B cell (primary cell): ENCODE measurements at regions of chr12 and their contacts with region 1.

Region 1: GRCh38 chr12:84874125-84874824 is 38.3 kb downstream of the SLC6A15 start:
- DNase-seq: peak; percentile 36
- ATAC-seq: peak; percentile 41
- H3K4me3 ChIP-seq: no peak overlapping the region
- H3K4me3 Mint-ChIP-seq: no peak overlapping the region
- H3K27ac ChIP-seq: no peak overlapping the region
- H3K27ac Mint-ChIP-seq: no peak overlapping the region
- H3K4me1 ChIP-seq: no peaks in the 10 kb centered on the region
- H3K4me1 Mint-ChIP-seq: no peaks in the 10 kb centered on the region
- H3K27me3 ChIP-seq: no peaks in the 10 kb centered on the region
- H3K27me3 Mint-ChIP-seq: no peaks in the 10 kb centered on the region
- CTCF ChIP-seq: peak; percentile 95

Region 2: GRCh38 chr12:84891106-84891838 is 17.0 kb after region 1 on chr12:
- CTCF ChIA-PET with region 1: interaction called, 33 read pairs
- POLR2A ChIA-PET with region 1: no interaction called
- intact Hi-C with region 1: no loop called
- DNase-seq: no peak
- ATAC-seq: no peak
- H3K4me3 ChIP-seq: no peak overlapping the region
- H3K4me3 Mint-ChIP-seq: no peak overlapping the region
- H3K27ac ChIP-seq: no peak overlapping the region
- H3K27ac Mint-ChIP-seq: no peak overlapping the region
- H3K4me1 ChIP-seq: no peaks in the 10 kb centered on the region
- H3K4me1 Mint-ChIP-seq: no peaks in the 10 kb centered on the region
- H3K27me3 ChIP-seq: no peaks in the 10 kb centered on the region
- H3K27me3 Mint-ChIP-seq: no peaks in the 10 kb centered on the region
- CTCF ChIP-seq: no peak

Region 3: DNA sequence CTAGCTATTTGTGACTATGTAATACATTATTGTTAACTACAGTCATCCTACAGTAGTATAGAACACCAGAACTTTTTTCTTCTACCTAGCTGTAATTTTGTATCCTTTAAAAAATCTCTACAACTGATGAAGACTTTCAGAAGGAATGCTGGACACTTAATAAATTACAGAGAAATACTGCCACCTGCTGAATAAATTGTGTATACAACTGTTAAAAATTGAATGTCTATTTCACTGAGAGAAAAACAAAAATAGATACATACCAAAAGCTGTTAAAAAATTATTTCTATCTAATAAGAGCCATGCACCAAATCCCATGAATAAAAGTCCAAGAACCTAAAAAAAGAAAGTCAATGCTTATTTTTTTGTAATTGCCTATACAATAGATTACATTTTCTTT is 155.2 kb after region 1 on chr12:
- CTCF ChIA-PET with region 1: interaction called, 20 read pairs
- POLR2A ChIA-PET with region 1: no interaction called
- intact Hi-C with region 1: no loop called
- DNase-seq: no peak
- ATAC-seq: no peak
- H3K4me3 ChIP-seq: no peak overlapping the region
- H3K4me3 Mint-ChIP-seq: no peak overlapping the region
- H3K27ac ChIP-seq: no peak overlapping the region
- H3K27ac Mint-ChIP-seq: no peak overlapping the region
- H3K4me1 ChIP-seq: no peaks in the 10 kb centered on the region
- H3K4me1 Mint-ChIP-seq: no peaks in the 10 kb centered on the region
- H3K27me3 ChIP-seq: no peaks in the 10 kb centered on the region
- H3K27me3 Mint-ChIP-seq: no peaks in the 10 kb centered on the region
- CTCF ChIP-seq: peak; percentile 66

Region 4: GRCh38 chr12:85041395-85041794 is 167.1 kb after region 1 on chr12:
- CTCF ChIA-PET with region 1: no interaction called
- POLR2A ChIA-PET with region 1: no interaction called
- intact Hi-C with region 1: no loop called
- DNase-seq: no peak
- ATAC-seq: no peak
- H3K4me3 ChIP-seq: no peak overlapping the region
- H3K4me3 Mint-ChIP-seq: no peak overlapping the region
- H3K27ac ChIP-seq: no peak overlapping the region
- H3K27ac Mint-ChIP-seq: no peak overlapping the region
- H3K4me1 ChIP-seq: no peaks in the 10 kb centered on the region
- H3K4me1 Mint-ChIP-seq: peaks cover 1% of the 10 kb centered on the region
- H3K27me3 ChIP-seq: peaks cover 0 to 1% (median 0%) of the 10 kb centered on the region in 4 experiments
- H3K27me3 Mint-ChIP-seq: peaks cover 1% of the 10 kb centered on the region
- CTCF ChIP-seq: no peak

Region 5: DNA sequence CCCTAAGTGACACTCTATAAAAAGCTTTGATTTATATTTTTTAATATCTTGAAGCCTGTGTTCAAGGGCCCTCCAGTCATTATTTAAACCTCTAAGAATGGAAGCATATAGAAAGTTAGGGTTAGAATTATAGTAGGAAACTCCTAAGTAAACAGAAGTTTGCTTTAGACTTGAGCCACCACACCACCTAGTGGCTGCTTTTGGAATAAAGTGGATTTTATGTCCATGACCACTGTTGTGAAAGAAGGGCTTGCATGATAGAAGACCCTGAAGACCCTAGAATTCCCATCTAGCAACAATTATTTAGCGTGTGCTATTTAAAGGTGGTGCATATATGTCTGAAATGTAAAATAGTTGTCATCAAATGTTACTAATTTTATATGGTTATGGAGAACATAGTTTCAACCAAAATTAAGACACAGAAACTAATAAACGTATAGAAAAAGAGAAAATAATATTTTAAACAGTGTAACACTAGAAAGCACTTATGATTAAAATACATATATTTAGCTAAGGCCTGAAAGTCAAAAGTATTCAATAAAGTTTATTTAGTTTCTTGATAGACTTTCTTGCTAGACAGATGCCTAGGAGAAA is 183.2 kb after region 1 on chr12:
- CTCF ChIA-PET with region 1: interaction called, 7 read pairs
- POLR2A ChIA-PET with region 1: no interaction called
- intact Hi-C with region 1: loop called (anchors 2 kb)
- DNase-seq: peak; percentile 42
- ATAC-seq: peak; percentile 21
- H3K4me3 ChIP-seq: no peak overlapping the region
- H3K4me3 Mint-ChIP-seq: no peak overlapping the region
- H3K27ac ChIP-seq: no peak overlapping the region
- H3K27ac Mint-ChIP-seq: no peak overlapping the region
- H3K4me1 ChIP-seq: peaks cover 0 to 27% of the 10 kb centered on the region in 2 donors
- H3K4me1 Mint-ChIP-seq: peaks cover 21% of the 10 kb centered on the region
- H3K27me3 ChIP-seq: no peaks in the 10 kb centered on the region
- H3K27me3 Mint-ChIP-seq: peaks cover 3% of the 10 kb centered on the region
- CTCF ChIP-seq: peak; percentile 89

Region 6: GRCh38 chr12:85872497-85873091 is 998.3 kb after region 1 on chr12:
- CTCF ChIA-PET with region 1: interaction called, 8 read pairs
- POLR2A ChIA-PET with region 1: no interaction called
- intact Hi-C with region 1: loop called (anchors 2 kb)
- DNase-seq: peak; percentile 28
- ATAC-seq: no peak
- H3K4me3 ChIP-seq: no peak overlapping the region
- H3K4me3 Mint-ChIP-seq: no peak overlapping the region
- H3K27ac ChIP-seq: no peak overlapping the region
- H3K27ac Mint-ChIP-seq: no peak overlapping the region
- H3K4me1 ChIP-seq: no peaks in the 10 kb centered on the region
- H3K4me1 Mint-ChIP-seq: no peaks in the 10 kb centered on the region
- H3K27me3 ChIP-seq: no peaks in the 10 kb centered on the region
- H3K27me3 Mint-ChIP-seq: no peaks in the 10 kb centered on the region
- CTCF ChIP-seq: peak; percentile 84